IMR-90 (cell line): ENCODE measurements at regions of chr16 and their contacts with region 1.

Region 1: DNA sequence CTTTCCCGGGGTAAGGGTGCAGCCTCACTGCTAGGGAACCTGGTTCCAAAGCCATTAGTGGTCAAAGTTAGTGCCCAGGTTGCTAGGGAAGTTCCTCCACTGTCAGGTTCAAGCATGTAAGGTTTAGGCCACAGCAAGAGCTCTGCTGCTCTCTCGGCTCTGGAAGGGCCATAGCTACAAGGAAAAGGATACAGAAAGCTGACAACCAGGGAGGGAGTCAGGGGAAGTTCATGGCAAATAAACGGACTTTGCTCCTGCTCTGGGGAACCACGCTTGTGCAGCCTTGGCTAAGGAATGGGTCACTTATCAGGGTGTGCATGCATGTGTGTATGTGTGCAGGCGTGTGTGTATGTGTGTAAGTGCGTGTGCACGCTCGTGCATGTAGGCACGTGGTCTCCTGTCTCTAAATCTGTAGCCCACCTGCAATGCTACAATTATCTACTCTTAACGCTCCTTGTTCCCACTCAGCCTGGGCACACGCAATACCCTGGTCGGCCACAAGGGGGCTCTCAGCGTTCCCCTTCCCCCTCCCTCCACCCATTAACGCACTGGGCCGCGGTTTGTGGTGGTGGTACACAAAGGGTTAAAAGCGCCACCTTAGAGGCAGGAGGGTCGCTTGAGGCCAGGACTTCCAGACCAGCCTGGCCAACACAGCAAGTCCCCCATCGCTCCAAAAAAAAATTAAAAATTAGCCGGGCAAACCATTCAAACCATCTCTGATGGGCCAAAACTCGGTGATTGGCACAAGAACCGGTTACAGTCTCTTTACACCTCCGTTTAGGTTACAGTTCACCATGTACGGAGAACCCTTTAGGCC is 48.4 kb upstream of the KDM8 start:
- DNase-seq: peak; percentile 21
- ATAC-seq: peak; percentile 94
- H3K4me3 ChIP-seq: no peak overlapping the region
- H3K27ac ChIP-seq: no peak overlapping the region
- H3K4me1 ChIP-seq: 0 out of 2 replicates have a peak, but pooled peaks cover 1% of the 10 kb centered on the region
- H3K27me3 ChIP-seq: no peaks in the 10 kb centered on the region
- CTCF ChIP-seq: peak; percentile 88
- POLR2A ChIP-seq: no peak
- RAD21 ChIP-seq: peak; percentile 77

Region 2: GRCh38 chr16:27461483-27462171 is 306.7 kb after region 1 on chr16:
- CTCF ChIA-PET with region 1: no interaction called
- POLR2A ChIA-PET with region 1: no interaction called
- dilution Hi-C with region 1: no loop called
- in situ Hi-C with region 1: loop called (anchors 10 kb)
- intact Hi-C with region 1: loop called (anchors 1 kb)
- DNase-seq: peak; percentile 54
- ATAC-seq: peak; percentile 9; the same call in 1 of the 2 replicates
- H3K4me3 ChIP-seq: no peak overlapping the region
- H3K27ac ChIP-seq: no peak overlapping the region
- H3K4me1 ChIP-seq: peaks cover 4% of the 10 kb centered on the region
- H3K27me3 ChIP-seq: no peaks in the 10 kb centered on the region
- CTCF ChIP-seq: no peak
- POLR2A ChIP-seq: no peak
- RAD21 ChIP-seq: no peak